Activated CD4-positive, alpha-beta T cell treated with anti-CD3 and anti-CD28 coated beads, Interleukin-2, amount 10 ng/mL, durations not matched to agents 7 days and 5 days (primary cell): ENCODE measurements at regions of chr14 and their contacts with region 1.

Region 1: GRCh38 chr14:60346706-60347105 is 97.7 kb downstream of the PPM1A start:
- DNase-seq: no peak
- H3K4me3 Mint-ChIP-seq: no peak overlapping the region
- H3K27ac Mint-ChIP-seq: no peak overlapping the region
- H3K4me1 Mint-ChIP-seq: peaks cover 1% of the 10 kb centered on the region
- H3K27me3 Mint-ChIP-seq: peaks cover 7% of the 10 kb centered on the region

Region 2: GRCh38 chr14:60331201-60332045 is 15.3 kb before region 1 on chr14:
- CTCF ChIA-PET with region 1: interaction called, 11 read pairs
- POLR2A ChIA-PET with region 1: no interaction called
- DNase-seq: peak; percentile 80
- H3K4me3 Mint-ChIP-seq: peak overlapping the region; percentile 76
- H3K27ac Mint-ChIP-seq: peak overlapping the region; percentile 94
- H3K4me1 Mint-ChIP-seq: peaks cover 42% of the 10 kb centered on the region
- H3K27me3 Mint-ChIP-seq: peaks cover 40% of the 10 kb centered on the region